H1 (cell line): ENCODE measurements at regions of chr11 and their contacts with region 1.

Region 1: DNA sequence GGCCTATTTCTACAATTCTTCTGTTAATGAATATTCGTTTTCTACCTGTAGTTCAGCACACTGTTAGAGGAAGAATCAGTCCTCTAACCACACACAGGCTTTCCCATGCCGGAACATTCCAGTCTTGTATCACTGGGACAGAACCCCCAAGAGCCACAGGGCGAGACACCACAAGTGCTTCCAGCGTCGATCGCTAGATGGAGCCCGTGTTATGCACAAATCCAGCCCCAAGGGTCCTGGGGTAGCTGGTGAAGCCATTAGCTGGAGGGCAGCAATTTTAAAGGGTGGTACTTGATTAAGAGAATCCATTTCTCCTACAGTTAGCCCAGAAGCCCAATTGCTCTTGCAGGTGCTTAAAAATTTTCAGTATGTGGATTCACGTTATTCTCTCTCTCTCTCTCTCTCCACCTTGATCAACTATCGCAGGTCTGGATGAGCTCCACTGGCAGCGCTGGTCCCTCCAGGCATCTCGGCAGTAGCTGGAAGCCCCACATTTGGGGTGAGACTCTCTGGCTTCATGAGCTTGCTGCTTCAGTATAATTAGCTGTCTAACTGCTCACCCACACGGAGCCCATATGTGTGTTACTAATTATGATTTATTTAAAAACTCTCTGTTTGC is 148.2 kb upstream of the SNX19 start:
- DNase-seq: peak; percentile 82 to 93
- H3K4me3 ChIP-seq: no peak overlapping the region
- H3K27ac ChIP-seq: no peak overlapping the region
- H3K4me1 ChIP-seq: peaks cover 0 to 12% (median 8%) of the 10 kb centered on the region in 4 experiments; a peak in 5 of 7 replicates
- H3K27me3 ChIP-seq: no peaks in the 10 kb centered on the region; a peak in 1 of 7 replicates
- CTCF ChIP-seq: peak; percentile 87 to 98 (median 95)
- EP300 ChIP-seq: no peak
- POLR2A ChIP-seq: no peak
- RAD21 ChIP-seq: peak; percentile 99 to 100

Region 2: DNA sequence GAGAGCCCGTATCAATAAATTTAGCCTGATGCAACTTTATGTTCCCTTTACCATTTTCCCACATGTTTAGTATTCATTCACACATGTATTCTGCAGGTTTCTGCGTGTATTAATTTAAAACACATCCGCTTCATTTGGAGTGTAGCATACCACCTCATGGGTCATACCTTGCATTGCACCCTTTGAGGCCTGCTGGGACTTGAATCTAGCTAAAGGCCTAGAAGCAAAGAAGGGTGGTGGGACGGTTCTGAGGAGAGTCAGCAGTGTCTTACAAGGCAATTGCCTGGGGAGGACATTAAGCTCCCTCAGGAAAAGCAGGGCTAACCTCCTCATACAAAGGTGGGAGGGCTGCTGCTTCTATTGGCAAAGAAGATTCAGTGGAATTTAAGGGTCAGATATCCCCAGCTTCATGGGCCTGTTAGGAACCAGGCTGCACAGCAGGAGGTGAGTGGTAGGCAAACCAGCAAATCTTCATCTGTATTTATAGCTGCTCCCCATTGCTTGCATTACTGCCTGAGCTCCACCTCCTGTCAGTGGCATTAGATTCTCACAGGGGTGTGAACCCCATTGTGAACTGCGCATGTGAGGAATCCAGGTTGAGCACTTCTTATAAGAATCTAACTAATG is 132.3 kb before region 1 on chr11:
- CTCF ChIA-PET with region 1: no interaction called
- POLR2A ChIA-PET with region 1: no interaction called
- DNase-seq: no peak
- H3K4me3 ChIP-seq: no peak overlapping the region
- H3K27ac ChIP-seq: no peak overlapping the region
- H3K4me1 ChIP-seq: no peaks in the 10 kb centered on the region
- H3K27me3 ChIP-seq: no peaks in the 10 kb centered on the region; a peak in 1 of 7 replicates
- CTCF ChIP-seq: no peak
- EP300 ChIP-seq: no peak
- POLR2A ChIP-seq: no peak
- RAD21 ChIP-seq: no peak

Region 3: DNA sequence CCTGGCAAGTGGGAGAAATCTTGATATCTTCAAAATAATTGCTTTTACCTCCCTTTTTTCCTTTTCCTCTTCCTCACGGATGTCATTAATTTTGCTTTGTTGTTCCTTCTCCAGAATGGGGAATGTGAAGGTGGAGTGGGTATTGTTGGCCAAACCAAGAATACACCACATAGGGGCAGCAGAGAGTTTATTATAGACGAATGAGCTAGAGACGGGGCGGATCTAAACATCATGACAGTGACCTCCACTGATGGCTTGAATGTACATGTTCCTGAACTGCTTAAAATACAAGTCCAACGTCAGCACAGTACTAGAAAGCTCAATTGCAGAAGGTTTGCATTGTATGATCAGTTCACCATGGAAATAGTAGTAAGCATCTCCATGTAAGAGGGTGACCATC is 25.9 kb before region 1 on chr11:
- CTCF ChIA-PET with region 1: interaction called, 10 read pairs
- POLR2A ChIA-PET with region 1: no interaction called
- DNase-seq: no peak
- H3K4me3 ChIP-seq: no peak overlapping the region
- H3K27ac ChIP-seq: no peak overlapping the region
- H3K4me1 ChIP-seq: no peaks in the 10 kb centered on the region
- H3K27me3 ChIP-seq: no peaks in the 10 kb centered on the region
- CTCF ChIP-seq: peak in 2 of 3 experiments; percentile 59 to 68; a peak in 3 of 4 replicates
- EP300 ChIP-seq: no peak
- POLR2A ChIP-seq: no peak
- RAD21 ChIP-seq: peak; percentile 76 to 79

Region 4: DNA sequence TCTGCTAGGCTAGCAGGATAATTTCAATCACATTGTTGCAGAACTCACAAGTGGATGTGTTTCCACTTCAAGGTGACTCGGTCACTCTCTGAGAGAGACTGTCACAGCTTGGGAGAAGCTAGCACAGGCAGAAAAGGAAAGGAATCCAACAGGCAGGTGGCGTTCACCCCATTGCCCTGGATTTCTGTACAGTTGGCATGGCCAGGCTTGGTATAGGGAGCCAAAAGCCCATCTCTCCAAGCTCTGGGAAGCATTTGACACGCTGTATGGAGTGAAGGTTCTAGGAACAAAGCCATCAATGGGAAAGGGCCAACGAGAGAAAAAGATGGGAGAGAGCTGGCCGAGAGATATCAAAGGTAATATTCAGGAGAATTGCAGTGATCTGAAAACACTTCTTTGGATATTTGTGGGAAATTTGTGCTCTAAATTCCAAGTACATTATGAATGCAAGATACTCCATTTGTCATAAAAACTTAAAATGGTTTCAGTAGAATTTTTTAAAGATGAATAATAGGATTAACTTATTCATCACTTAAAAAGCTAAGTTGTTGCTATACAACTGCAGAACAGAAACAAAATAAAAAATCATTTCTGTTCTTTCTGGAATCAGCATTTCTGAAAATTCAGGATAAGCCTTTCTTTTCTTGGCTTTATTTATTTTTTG is 82.5 kb after region 1 on chr11:
- CTCF ChIA-PET with region 1: no interaction called
- POLR2A ChIA-PET with region 1: no interaction called
- DNase-seq: no peak
- H3K4me3 ChIP-seq: no peak overlapping the region
- H3K27ac ChIP-seq: no peak overlapping the region
- H3K4me1 ChIP-seq: no peaks in the 10 kb centered on the region
- H3K27me3 ChIP-seq: no peaks in the 10 kb centered on the region; a peak in 2 of 7 replicates
- CTCF ChIP-seq: no peak
- EP300 ChIP-seq: no peak
- POLR2A ChIP-seq: no peak
- RAD21 ChIP-seq: peak in 1 of 2 experiments; percentile 12; a peak in 1 of 4 replicates

Region 5: GRCh38 chr11:131392528-131393255 is 328.2 kb after region 1 on chr11:
- CTCF ChIA-PET with region 1: interaction called, 10 read pairs
- POLR2A ChIA-PET with region 1: no interaction called
- DNase-seq: peak in 1 of 2 experiments; percentile 19
- H3K4me3 ChIP-seq: no peak overlapping the region
- H3K27ac ChIP-seq: no peak overlapping the region
- H3K4me1 ChIP-seq: peaks cover 0 to 6% (median 3%) of the 10 kb centered on the region in 4 experiments; a peak in 5 of 7 replicates
- H3K27me3 ChIP-seq: no peaks in the 10 kb centered on the region
- CTCF ChIP-seq: peak in 1 of 3 experiments; percentile 59; a peak in 2 of 4 replicates
- EP300 ChIP-seq: no peak
- POLR2A ChIP-seq: no peak
- RAD21 ChIP-seq: peak; percentile 59 to 61

Region 6: GRCh38 chr11:131465746-131466145 is 401.3 kb after region 1 on chr11:
- CTCF ChIA-PET with region 1: interaction called, 15 read pairs
- POLR2A ChIA-PET with region 1: no interaction called
- DNase-seq: peak; percentile 38 to 74
- H3K4me3 ChIP-seq: no peak overlapping the region
- H3K27ac ChIP-seq: no peak overlapping the region
- H3K4me1 ChIP-seq: peaks cover 2 to 3% (median 2%) of the 10 kb centered on the region in 4 experiments; a peak in 4 of 7 replicates
- H3K27me3 ChIP-seq: no peaks in the 10 kb centered on the region
- CTCF ChIP-seq: peak; percentile 75 to 99 (median 84)
- EP300 ChIP-seq: no peak
- POLR2A ChIP-seq: no peak
- RAD21 ChIP-seq: peak; percentile 58 to 73

Region 7: DNA sequence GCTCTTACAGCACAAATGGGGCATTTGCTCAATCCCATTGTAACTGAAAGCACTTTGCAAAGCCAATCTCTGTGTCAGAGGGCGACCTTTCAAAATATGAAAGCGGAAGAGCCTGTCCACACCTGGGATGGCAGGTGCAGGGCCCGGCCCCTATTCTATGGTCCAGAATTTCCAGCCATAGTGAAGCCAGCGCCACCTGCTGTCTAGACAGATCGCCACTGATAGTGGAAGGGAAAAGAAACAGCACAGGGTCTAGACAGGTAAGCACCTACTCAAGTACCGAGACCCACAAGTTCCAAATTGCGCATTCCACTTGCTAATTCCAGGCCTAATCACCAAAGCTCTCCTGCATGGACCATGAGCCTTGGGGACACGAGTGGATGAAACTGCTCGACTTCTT is 447.3 kb after region 1 on chr11:
- CTCF ChIA-PET with region 1: interaction called, 59 read pairs
- POLR2A ChIA-PET with region 1: interaction called, 3 read pairs
- DNase-seq: peak; percentile 25 to 82
- H3K4me3 ChIP-seq: no peak overlapping the region
- H3K27ac ChIP-seq: no peak overlapping the region
- H3K4me1 ChIP-seq: no peaks in the 10 kb centered on the region; a peak in 1 of 7 replicates
- H3K27me3 ChIP-seq: no peaks in the 10 kb centered on the region
- CTCF ChIP-seq: peak; percentile 65 to 84 (median 82)
- EP300 ChIP-seq: no peak
- POLR2A ChIP-seq: no peak
- RAD21 ChIP-seq: peak; percentile 81 to 87

Region 8: GRCh38 chr11:131584785-131585592 is 520.5 kb after region 1 on chr11:
- CTCF ChIA-PET with region 1: interaction called, 12 read pairs
- POLR2A ChIA-PET with region 1: no interaction called
- DNase-seq: peak; percentile 41 to 91
- H3K4me3 ChIP-seq: no peak overlapping the region
- H3K27ac ChIP-seq: no peak overlapping the region
- H3K4me1 ChIP-seq: peaks cover 3 to 12% (median 4%) of the 10 kb centered on the region in 4 experiments; a peak in 4 of 7 replicates
- H3K27me3 ChIP-seq: no peaks in the 10 kb centered on the region
- CTCF ChIP-seq: peak; percentile 87 to 91 (median 89)
- EP300 ChIP-seq: no peak; a peak in 1 of 3 replicates
- POLR2A ChIP-seq: no peak
- RAD21 ChIP-seq: peak; percentile 71 to 82

Region 9: GRCh38 chr11:131674051-131674755 is 609.7 kb after region 1 on chr11:
- CTCF ChIA-PET with region 1: interaction called, 28 read pairs
- POLR2A ChIA-PET with region 1: no interaction called
- DNase-seq: peak; percentile 50 to 96
- H3K4me3 ChIP-seq: no peak overlapping the region
- H3K27ac ChIP-seq: no peak overlapping the region
- H3K4me1 ChIP-seq: peaks cover 3 to 9% (median 5%) of the 10 kb centered on the region in 4 experiments; a peak in 5 of 7 replicates
- H3K27me3 ChIP-seq: no peaks in the 10 kb centered on the region; a peak in 1 of 7 replicates
- CTCF ChIP-seq: peak; percentile 95 to 97 (median 97)
- EP300 ChIP-seq: no peak
- POLR2A ChIP-seq: no peak
- RAD21 ChIP-seq: peak; percentile 99